Calu3 (cell line): ENCODE measurements at regions of chr16 and their contacts with region 1.

Region 1: DNA sequence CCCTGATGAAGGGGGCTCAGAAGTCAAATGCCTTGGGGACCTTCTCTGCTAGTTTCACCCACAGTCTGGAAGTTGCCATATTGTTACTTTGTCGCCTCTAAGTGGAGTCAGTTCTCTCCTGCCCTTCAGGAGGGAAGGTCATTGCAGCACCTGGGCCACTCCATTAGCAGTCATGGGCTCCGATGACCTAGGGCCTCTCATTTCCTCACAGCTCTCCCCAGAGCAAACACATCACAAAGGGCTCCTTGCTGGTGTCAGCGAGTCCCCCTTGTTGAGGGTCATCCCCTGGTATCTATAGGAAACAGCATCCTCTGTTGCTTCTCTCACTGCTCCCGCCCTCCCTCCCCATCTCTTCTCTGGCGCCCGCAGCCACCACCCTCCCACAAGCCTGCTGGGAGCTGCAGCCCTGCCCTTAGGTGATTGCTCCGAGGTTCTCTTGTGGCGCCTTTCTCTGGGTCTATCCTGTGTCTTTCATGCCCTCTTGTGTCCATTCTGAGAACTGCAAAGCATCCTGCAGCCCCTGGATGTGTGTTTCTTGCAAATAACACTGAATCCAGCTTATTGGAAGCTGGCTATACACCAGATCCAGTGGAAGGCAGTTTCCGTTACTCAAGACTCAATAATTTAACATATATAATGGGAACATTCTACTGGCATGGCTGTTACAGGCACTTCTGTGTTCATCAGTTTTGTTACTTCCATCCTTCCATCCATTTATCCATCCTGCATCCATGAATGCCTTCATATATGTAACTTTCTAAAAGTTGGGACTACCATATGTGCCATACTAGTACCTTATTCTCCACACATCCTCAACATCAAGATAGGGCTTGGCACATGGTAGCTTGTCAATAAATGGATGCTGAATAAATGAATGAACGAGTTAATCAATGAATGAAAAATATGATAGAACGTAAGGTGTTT is 21.2 kb downstream of the PDILT start:
- DNase-seq: peak; percentile 81
- H3K4me3 Mint-ChIP-seq: no peak overlapping the region
- H3K27ac Mint-ChIP-seq: no peak overlapping the region
- H3K4me1 Mint-ChIP-seq: no peaks in the 10 kb centered on the region
- H3K27me3 Mint-ChIP-seq: peaks cover 50% of the 10 kb centered on the region
- CTCF ChIP-seq: peak; percentile 89

Region 2: DNA sequence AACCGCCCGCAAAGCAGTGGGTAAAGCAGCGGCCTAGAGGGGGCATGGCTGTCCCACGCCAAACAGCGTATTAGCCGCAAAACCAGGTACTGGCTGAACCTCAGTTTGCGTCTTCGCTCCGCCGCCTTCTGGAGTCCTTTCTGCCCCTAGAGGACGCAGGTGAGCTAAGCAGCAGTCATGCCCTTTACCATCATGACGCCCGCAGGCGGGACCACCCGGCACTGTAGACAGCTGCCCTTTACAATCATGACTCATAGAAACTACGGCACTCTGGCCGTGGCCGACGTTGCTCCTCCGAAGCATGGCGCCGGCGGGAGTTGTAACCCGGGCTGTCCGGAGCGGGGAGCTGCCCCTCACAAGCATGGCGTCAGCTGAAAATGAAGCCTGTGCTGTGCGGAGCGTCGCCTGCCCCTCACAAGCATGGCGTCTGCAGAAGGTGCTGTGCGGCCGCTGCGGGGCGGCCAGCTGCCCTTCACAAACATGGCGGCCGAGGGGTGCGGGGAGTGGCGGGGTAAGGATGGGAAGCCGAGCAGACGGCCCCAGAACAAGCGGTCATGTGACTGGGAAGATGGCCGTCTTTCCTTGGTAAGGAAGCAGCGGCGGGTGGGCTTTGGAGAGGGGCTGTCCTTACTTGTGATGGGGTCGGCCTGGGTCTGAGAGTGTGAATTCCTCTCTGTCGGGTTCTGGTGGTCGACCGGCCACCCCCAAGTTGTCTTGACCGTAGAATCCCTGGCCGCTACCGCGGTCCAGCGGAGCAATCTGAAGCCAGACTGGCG is 828.0 kb before region 1 on chr16 and contains the start of gene VPS35L:
- CTCF ChIA-PET with region 1: no interaction called
- intact Hi-C with region 1: loop called (anchors 2 kb)
- DNase-seq: peak; percentile 94
- H3K4me3 Mint-ChIP-seq: peak within 1 kb of the TSS; percentile 71
- H3K27ac Mint-ChIP-seq: peak within 1 kb of the TSS; percentile 66
- H3K4me1 Mint-ChIP-seq: no peaks in the 10 kb centered on the region
- H3K27me3 Mint-ChIP-seq: no peaks in the 10 kb centered on the region
- CTCF ChIP-seq: peak; percentile 51
- total RNA-seq, gene VPS35L: 14.2 and 25.4 TPM in 2 replicates

Region 3: GRCh38 chr16:19601083-19601976 is 782.0 kb before region 1 on chr16:
- CTCF ChIA-PET with region 1: no interaction called
- intact Hi-C with region 1: loop called (anchors 10 kb)
- DNase-seq: peak; percentile 60
- H3K4me3 Mint-ChIP-seq: no peak overlapping the region
- H3K27ac Mint-ChIP-seq: no peak overlapping the region
- H3K4me1 Mint-ChIP-seq: peaks cover 21% of the 10 kb centered on the region
- H3K27me3 Mint-ChIP-seq: no peaks in the 10 kb centered on the region
- CTCF ChIP-seq: peak; percentile 64

Region 4: DNA sequence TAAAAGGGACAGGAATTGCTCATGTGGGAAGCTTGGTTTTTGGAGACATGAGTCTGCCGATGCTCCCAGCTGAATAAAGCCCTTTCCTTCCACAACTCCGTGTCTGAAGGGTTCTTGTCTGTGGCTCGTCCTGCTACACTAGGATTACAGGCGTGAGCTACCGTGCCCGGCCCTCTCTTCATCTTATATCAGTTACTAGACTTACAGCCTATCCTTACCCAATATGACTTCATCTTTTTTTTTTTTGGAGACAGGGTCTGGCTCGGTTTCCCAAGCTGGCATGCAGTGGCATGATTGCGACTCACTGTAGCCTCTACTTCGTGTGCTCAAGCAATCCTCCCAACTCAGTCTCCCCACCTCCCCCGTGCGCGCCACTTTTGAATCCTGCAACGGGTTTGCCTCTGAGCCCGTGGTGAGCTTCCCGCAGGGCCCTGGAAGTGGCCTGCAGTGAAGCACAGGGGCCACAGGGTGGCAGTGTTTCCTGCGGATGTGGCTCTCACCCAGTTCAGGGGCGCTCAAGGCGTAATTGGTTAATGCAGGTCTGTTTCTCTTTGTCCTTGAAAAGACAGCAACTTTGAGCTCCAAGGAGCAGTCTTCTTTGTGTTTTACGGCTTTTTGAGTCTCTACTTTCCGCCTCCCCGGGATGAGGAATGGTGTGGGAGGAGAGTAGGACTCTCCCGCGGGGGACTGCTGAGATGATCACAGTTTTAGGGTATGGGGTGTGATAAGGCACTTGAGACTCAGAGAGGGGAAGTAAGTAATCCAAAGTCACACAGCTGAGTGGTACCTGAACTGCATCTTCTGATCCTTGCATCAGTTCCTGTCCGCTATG is 476.0 kb before region 1 on chr16:
- CTCF ChIA-PET with region 1: interaction called, 99 read pairs
- intact Hi-C with region 1: loop called (anchors 1 kb)
- DNase-seq: peak; percentile 88
- H3K4me3 Mint-ChIP-seq: no peak overlapping the region
- H3K27ac Mint-ChIP-seq: no peak overlapping the region
- H3K4me1 Mint-ChIP-seq: peaks cover 13% of the 10 kb centered on the region
- H3K27me3 Mint-ChIP-seq: peaks cover 52% of the 10 kb centered on the region
- CTCF ChIP-seq: peak; percentile 97

Region 5: DNA sequence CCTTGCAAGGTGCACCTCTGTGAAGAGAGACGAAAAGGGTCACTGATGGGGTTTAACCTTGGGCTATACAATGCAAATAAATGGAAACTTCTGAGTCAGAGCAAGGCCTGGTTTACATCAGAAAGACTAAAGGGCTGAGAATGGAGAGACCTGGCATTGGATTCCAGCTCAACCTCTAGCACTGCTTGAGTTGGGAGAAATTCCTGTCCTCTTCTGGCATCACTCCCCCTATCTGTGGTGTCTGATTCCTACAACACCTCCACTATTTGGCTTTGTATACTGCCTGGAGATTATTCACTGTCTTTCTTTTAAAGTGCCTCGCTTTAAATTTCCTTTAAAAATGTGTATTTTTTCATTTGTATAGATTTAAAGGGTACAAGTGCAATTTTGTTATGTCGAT is 378.4 kb before region 1 on chr16:
- CTCF ChIA-PET with region 1: no interaction called
- intact Hi-C with region 1: no loop called
- DNase-seq: no peak
- H3K4me3 Mint-ChIP-seq: no peak overlapping the region
- H3K27ac Mint-ChIP-seq: no peak overlapping the region
- H3K4me1 Mint-ChIP-seq: no peaks in the 10 kb centered on the region
- H3K27me3 Mint-ChIP-seq: peaks cover 86% of the 10 kb centered on the region
- CTCF ChIP-seq: no peak

Region 6: GRCh38 chr16:20300312-20301097 is 82.9 kb before region 1 on chr16:
- CTCF ChIA-PET with region 1: interaction called, 8 read pairs
- intact Hi-C with region 1: loop called (anchors 5 kb)
- DNase-seq: peak; percentile 63
- H3K4me3 Mint-ChIP-seq: no peak overlapping the region
- H3K27ac Mint-ChIP-seq: no peak overlapping the region
- H3K4me1 Mint-ChIP-seq: no peaks in the 10 kb centered on the region
- H3K27me3 Mint-ChIP-seq: peaks cover 65% of the 10 kb centered on the region
- CTCF ChIP-seq: peak; percentile 91